Activated B cell treated with CpG ODN at 0.5 μM for 24 hours (primary cell): ENCODE measurements at regions of chr3 and their contacts with region 1.

Region 1: DNA sequence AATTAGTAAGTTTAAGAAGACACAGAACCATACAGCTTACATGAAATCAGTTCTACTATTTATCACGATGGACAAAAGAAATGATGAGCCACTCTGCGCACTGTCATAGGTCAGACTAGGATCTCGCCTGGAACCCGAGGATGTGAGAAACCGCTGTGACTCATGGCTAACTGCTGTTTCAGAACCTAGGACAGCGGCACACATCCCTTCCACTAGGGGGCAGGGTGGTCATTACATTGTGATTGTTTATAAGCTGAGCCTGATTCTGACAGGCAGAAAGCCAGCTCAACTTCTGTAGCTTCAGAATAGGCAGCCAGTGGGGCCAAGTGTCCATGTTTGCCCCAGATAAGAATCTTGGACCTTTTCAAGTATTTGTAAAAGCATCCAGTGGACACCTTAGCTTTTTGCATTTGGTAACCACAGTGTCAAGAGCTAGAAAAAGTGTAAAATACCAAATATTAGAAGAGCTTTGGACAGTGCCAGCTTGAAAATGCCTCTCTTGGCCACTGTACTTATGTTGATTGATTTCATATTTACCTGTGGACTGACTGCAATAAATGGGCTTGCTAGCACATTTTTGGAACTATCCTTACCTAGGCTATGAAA is 115.8 kb downstream of the KBTBD8 start:
- DNase-seq: peak; percentile 66
- ATAC-seq: peak; percentile 99
- H3K4me3 Mint-ChIP-seq: no peak overlapping the region
- H3K27ac Mint-ChIP-seq: no peak overlapping the region
- H3K4me1 Mint-ChIP-seq: no peaks in the 10 kb centered on the region
- H3K27me3 Mint-ChIP-seq: peaks cover 12% of the 10 kb centered on the region
- CTCF ChIP-seq: peak; percentile 48

Region 2: DNA sequence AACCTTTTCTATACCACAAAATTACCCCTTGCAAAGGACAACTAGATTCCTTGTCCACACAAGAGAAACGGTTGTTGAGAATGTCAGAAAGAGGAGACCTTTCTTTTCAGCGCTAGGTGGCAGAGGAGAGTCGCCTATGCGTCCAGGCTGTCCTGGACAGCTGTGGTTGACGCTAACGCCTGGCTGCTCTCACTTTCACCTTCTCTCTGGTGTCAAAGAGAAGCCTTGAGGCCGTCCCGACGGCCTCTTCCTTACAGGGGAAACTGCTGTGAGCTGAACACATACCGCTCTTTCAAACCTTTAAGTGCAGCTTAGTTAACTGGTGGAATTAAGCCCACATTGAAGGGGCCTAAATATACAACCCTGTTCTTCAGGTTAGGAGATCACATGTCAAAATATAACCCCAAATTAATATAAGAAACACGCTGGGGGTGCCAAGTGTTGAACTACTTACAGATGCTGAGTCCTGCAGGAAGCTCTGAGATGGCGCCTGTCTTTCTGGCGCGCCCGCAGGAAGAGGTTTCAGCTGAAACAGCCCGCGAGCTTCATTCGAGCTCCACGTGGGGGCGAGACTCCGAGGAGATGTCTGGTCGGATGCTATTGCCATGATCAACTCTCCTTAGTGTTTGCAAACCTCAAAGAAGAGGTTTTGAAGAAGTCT is 141.9 kb before region 1 on chr3:
- CTCF ChIA-PET with region 1: interaction called, 66 read pairs
- POLR2A ChIA-PET with region 1: interaction called, 3 read pairs
- intact Hi-C with region 1: loop called (anchors 1 kb)
- DNase-seq: peak; percentile 40
- ATAC-seq: peak; percentile 96
- H3K4me3 Mint-ChIP-seq: peak overlapping the region; percentile 84
- H3K27ac Mint-ChIP-seq: peak overlapping the region; percentile 88
- H3K4me1 Mint-ChIP-seq: peaks cover 15% of the 10 kb centered on the region
- H3K27me3 Mint-ChIP-seq: no peaks in the 10 kb centered on the region
- CTCF ChIP-seq: peak; percentile 42

Region 3: DNA sequence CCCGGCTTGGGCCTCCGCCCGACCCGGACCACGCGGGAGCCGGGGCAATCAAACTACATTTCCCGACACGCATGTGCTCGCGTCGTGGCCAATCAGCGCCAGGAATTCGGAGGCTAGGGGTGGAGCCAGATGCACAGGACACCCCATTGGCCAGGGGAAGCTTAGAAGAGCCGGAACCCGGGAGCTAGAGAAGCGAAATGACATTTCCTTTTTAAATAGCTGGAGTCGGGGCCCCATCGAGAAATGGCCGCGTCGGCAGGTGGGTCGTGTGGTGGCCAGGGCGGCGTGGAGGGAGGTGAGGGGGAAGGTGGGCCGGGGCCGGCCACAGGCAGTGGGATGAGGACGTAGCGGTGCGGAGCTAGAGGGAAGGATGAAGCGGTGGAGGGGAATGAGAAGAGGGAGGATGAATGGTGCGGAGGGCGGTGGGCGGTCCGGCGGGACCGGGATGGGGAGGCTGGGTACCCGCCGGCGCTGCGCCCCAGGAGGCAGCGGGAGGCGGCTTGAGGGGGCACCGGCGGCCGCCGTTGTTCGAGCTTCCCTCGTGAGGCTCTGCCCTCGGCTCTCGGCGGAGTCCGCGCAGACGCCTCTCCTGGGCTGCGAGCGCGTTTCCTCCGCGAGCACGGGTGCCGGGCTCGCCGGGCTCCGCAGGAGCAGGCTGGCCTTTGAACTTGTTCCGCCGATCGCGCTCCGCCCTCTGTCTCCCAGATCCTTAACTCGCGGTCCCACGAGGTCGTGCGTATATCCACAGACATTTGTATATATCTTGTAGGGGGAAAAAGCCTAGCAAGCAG is 115.6 kb before region 1 on chr3 and contains the start of gene KBTBD8:
- CTCF ChIA-PET with region 1: interaction called, 10 read pairs
- POLR2A ChIA-PET with region 1: interaction called, 14 read pairs
- intact Hi-C with region 1: loop called (anchors 1 kb)
- DNase-seq: peak; percentile 88
- ATAC-seq: peak; percentile 88
- H3K4me3 Mint-ChIP-seq: peak within 1 kb of the TSS; percentile 88
- H3K27ac Mint-ChIP-seq: peak within 1 kb of the TSS; percentile 93
- H3K4me1 Mint-ChIP-seq: peaks cover 47% of the 10 kb centered on the region
- H3K27me3 Mint-ChIP-seq: peaks cover 3% of the 10 kb centered on the region
- CTCF ChIP-seq: no peak
- total RNA-seq, gene KBTBD8: 45.4 and 53.3 TPM in 2 replicates

Region 4: GRCh38 chr3:67048067-67048714 is 65.7 kb before region 1 on chr3:
- CTCF ChIA-PET with region 1: interaction called, 34 read pairs
- POLR2A ChIA-PET with region 1: interaction called, 6 read pairs
- intact Hi-C with region 1: loop called (anchors 1 kb)
- DNase-seq: no peak
- ATAC-seq: peak; percentile 89
- H3K4me3 Mint-ChIP-seq: peak overlapping the region; percentile 75
- H3K27ac Mint-ChIP-seq: peak overlapping the region; percentile 93
- H3K4me1 Mint-ChIP-seq: peaks cover 52% of the 10 kb centered on the region
- H3K27me3 Mint-ChIP-seq: no peaks in the 10 kb centered on the region
- CTCF ChIP-seq: no peak

Region 5: GRCh38 chr3:67215690-67216089 is 101.8 kb after region 1 on chr3:
- CTCF ChIA-PET with region 1: no interaction called
- POLR2A ChIA-PET with region 1: no interaction called
- intact Hi-C with region 1: no loop called
- DNase-seq: no peak
- ATAC-seq: no peak
- H3K4me3 Mint-ChIP-seq: no peak overlapping the region
- H3K27ac Mint-ChIP-seq: no peak overlapping the region
- H3K4me1 Mint-ChIP-seq: no peaks in the 10 kb centered on the region
- H3K27me3 Mint-ChIP-seq: no peaks in the 10 kb centered on the region
- CTCF ChIP-seq: no peak

Region 6: GRCh38 chr3:67790043-67790442 is 676.1 kb after region 1 on chr3:
- CTCF ChIA-PET with region 1: interaction called, 33 read pairs
- POLR2A ChIA-PET with region 1: no interaction called
- intact Hi-C with region 1: loop called (anchors 1 kb)
- DNase-seq: no peak
- ATAC-seq: peak; percentile 50
- H3K4me3 Mint-ChIP-seq: no peak overlapping the region
- H3K27ac Mint-ChIP-seq: no peak overlapping the region
- H3K4me1 Mint-ChIP-seq: no peaks in the 10 kb centered on the region
- H3K27me3 Mint-ChIP-seq: peaks cover 11% of the 10 kb centered on the region
- CTCF ChIP-seq: no peak

Region 7: DNA sequence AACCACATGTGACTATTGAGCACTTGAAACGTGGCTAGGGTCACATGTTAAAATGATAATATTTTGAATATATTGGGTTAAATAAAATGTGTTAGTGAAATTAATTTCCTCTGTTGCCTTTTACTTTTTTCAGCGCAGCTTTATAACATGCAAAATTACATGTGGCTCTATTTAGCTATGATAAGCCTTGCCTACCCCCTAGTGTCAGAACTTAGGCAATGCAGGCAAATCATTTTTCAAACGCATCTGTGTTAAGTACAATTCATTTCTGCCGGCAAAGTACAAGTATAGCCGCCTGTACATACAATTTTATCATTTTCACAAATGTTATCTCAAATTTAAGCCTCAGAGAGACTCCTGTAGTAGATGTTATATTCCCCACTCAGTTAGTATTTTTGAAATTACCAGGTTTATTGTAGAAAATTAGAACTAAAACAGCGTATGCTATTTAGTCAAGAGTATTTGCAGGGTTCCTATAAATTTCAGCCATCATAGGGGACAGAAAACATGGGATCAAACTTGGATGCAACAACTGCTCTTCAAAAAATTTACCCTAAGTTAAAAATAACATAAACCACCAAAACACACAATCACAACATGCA is 1762.3 kb after region 1 on chr3:
- CTCF ChIA-PET with region 1: interaction called, 50 read pairs
- POLR2A ChIA-PET with region 1: no interaction called
- intact Hi-C with region 1: loop called (anchors 1 kb)
- DNase-seq: no peak
- ATAC-seq: peak; percentile 69
- H3K4me3 Mint-ChIP-seq: no peak overlapping the region
- H3K27ac Mint-ChIP-seq: no peak overlapping the region
- H3K4me1 Mint-ChIP-seq: no peaks in the 10 kb centered on the region
- H3K27me3 Mint-ChIP-seq: peaks cover 23% of the 10 kb centered on the region
- CTCF ChIP-seq: peak; percentile 32

Region 8: DNA sequence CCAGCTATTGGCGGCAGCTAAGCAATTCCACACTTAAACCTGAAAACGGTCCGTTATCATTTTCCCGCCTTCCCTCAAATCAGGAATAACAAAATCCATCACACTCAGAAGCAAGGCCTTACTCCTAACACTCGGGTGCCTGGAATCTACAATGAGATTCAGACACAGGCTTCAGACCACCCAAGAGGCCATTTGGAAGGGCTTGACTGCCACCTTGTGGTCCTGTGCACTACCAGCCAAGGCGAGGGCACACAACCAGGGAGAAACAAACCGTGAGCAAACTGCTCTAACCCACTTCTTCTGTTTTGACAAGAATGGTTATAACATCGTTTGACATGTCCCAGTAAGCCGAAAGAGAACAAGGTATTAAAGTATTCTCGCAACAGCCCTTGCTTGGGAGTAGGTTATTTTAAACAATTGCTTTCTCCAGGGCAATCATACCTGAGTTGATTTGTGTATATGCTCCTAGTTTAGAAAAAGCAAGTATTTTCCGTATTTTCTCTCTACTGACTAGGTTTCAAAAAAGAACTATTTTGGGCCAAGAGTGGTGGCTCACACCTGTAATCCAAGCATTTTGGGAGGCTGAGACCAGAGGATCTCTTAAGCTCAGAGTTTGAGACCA is 1858.6 kb after region 1 on chr3:
- CTCF ChIA-PET with region 1: interaction called, 5 read pairs
- POLR2A ChIA-PET with region 1: no interaction called
- intact Hi-C with region 1: loop called (anchors 10 kb)
- DNase-seq: no peak
- ATAC-seq: no peak
- H3K4me3 Mint-ChIP-seq: no peak overlapping the region
- H3K27ac Mint-ChIP-seq: no peak overlapping the region
- H3K4me1 Mint-ChIP-seq: no peaks in the 10 kb centered on the region
- H3K27me3 Mint-ChIP-seq: peaks cover 6% of the 10 kb centered on the region
- CTCF ChIP-seq: no peak